ENCODE measurements at regions of chr17 and their contacts with region 1.

Region 1: DNA sequence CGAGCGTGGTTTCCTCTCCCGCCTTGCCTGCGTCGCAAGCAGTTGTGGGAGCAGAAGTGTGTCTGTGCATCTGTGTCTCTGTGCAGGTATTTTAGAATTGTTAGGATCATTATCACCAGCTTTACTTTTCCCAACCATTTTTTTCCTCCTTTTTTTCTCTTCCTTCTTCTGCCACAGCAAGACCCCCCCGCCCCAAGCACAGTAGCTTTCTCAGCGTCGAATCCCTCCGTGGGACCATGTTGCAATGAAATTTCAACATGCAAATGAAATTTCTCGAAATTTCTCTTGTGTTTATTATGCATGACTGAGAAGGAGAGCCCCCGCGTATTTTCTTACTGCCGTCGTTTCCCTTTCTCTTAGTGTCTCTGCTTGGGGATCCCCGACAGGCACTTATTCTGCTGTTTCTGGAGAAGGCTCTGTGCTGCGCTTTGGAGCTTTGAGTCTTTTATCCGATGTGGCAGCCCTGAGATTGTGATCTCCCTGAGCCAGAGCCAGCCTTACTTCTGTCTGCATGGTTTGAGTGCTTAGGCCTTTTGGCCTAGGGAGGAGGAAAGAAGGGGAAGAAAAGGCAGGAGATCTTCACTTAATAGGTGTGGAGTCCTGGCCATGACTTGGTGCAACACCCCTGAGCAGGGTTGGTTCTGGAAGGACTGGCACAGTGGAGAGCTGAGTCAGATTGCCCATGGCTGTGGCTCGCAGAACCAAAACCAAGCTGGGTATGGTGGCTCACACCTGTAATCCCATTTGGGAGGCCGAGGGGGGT is 5.0 kb downstream of the ARMC7 start:
- DNase-seq: no peak
- ATAC-seq: no peak
- H3K4me3 ChIP-seq: peak overlapping the region; percentile 37
- H3K27ac ChIP-seq: peak overlapping the region; percentile 81
- H3K4me1 ChIP-seq: peaks cover 6% of the 10 kb centered on the region; the same call in 1 of the 2 replicates
- H3K27me3 ChIP-seq: no peaks in the 10 kb centered on the region
- CTCF ChIP-seq: no peak
- POLR2A ChIP-seq: no peak
- RAD21 ChIP-seq: no peak

Region 2: DNA sequence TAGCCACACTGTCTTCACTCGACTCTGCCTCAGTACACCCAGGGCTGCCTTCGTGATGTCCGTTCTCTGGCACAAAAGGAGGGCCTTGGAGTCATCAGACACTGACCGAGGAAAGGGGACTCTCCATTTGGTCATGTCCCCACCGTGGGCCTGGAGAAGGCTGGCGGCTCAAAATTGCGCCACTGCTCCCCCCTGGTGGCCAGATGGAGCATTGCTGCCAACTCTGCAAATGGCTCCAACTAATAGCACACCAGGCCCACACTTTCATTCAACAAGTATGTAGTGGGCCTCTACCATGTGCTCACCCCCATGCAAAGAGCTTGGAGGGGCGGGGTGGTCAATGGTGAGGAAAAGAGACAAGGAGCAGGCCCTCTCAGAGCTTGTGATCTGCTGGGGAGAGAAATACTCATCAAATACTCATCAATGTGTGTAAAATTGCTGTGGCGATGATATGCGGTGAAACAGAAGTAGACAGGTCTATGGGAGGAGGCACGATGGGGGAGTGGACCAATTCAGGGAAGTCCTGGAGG is 249.8 kb before region 1 on chr17:
- CTCF ChIA-PET with region 1: no interaction called
- POLR2A ChIA-PET with region 1: no interaction called
- dilution Hi-C with region 1: no loop called
- in situ Hi-C with region 1: no loop called
- intact Hi-C with region 1: no loop called
- DNase-seq: peak; percentile 57
- ATAC-seq: peak; percentile 89
- H3K4me3 ChIP-seq: no peak overlapping the region
- H3K27ac ChIP-seq: no peak overlapping the region
- H3K4me1 ChIP-seq: no peaks in the 10 kb centered on the region; the same call in 1 of the 2 replicates
- H3K27me3 ChIP-seq: peaks cover 24% of the 10 kb centered on the region
- CTCF ChIP-seq: peak; percentile 90
- POLR2A ChIP-seq: no peak
- RAD21 ChIP-seq: peak; percentile 80

Region 3: GRCh38 chr17:75012346-75013091 is 102.2 kb before region 1 on chr17 and contains the start of gene MRPL58:
- CTCF ChIA-PET with region 1: no interaction called
- POLR2A ChIA-PET with region 1: no interaction called
- dilution Hi-C with region 1: no loop called
- in situ Hi-C with region 1: no loop called
- intact Hi-C with region 1: no loop called
- DNase-seq: peak; percentile 83
- ATAC-seq: peak; percentile 95
- H3K4me3 ChIP-seq: peak within 1 kb of the TSS; percentile 84
- H3K27ac ChIP-seq: peak within 1 kb of the TSS; percentile 86
- H3K4me1 ChIP-seq: peaks cover 6% of the 10 kb centered on the region
- H3K27me3 ChIP-seq: no peaks in the 10 kb centered on the region
- CTCF ChIP-seq: peak; percentile 58
- POLR2A ChIP-seq: peak; percentile 81
- RAD21 ChIP-seq: peak; percentile 45
- total RNA-seq, gene MRPL58: 42.5 and 53.9 TPM in 2 replicates

Region 4: DNA sequence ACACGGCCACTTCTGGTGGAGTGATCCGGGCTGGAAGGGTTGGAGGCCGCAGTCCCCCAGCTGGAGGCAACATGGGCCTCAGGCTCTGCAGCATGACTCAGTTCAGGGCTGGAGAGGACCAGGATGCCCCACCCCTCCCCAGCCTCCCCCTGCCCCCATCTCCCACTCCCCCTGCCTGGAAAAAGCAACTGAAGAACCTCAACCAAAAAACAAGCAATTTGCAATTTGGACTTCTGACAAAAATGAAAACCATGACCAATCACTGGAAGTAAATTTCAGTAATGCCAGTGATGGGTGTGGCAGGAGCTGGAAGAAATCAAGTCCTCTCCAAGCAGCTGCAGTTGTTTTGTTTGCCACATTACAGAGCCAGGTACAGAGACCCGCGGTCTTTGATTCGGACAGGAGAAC is 162.9 kb after region 1 on chr17:
- CTCF ChIA-PET with region 1: no interaction called
- POLR2A ChIA-PET with region 1: interaction called, 13 read pairs
- dilution Hi-C with region 1: no loop called
- in situ Hi-C with region 1: no loop called
- intact Hi-C with region 1: no loop called
- DNase-seq: peak; percentile 32
- ATAC-seq: peak; percentile 59
- H3K4me3 ChIP-seq: no peak overlapping the region
- H3K27ac ChIP-seq: no peak overlapping the region
- H3K4me1 ChIP-seq: peaks cover 8% of the 10 kb centered on the region
- H3K27me3 ChIP-seq: no peaks in the 10 kb centered on the region
- CTCF ChIP-seq: no peak
- POLR2A ChIP-seq: no peak
- RAD21 ChIP-seq: no peak

Region 5: GRCh38 chr17:75309025-75309772 is 194.5 kb after region 1 on chr17:
- CTCF ChIA-PET with region 1: no interaction called
- POLR2A ChIA-PET with region 1: no interaction called
- dilution Hi-C with region 1: no loop called
- in situ Hi-C with region 1: no loop called
- intact Hi-C with region 1: no loop called
- DNase-seq: no peak
- ATAC-seq: no peak
- H3K4me3 ChIP-seq: no peak overlapping the region
- H3K27ac ChIP-seq: no peak overlapping the region
- H3K4me1 ChIP-seq: peaks cover 2% of the 10 kb centered on the region; the same call in 1 of the 2 replicates
- H3K27me3 ChIP-seq: no peaks in the 10 kb centered on the region
- CTCF ChIP-seq: no peak
- POLR2A ChIP-seq: no peak
- RAD21 ChIP-seq: no peak

Measured in IMR-90 (cell line).